ENCODE measurements at regions of chr3 and their contacts with region 1.

Region 1: GRCh38 chr3:136929984-136930670 is 27.7 kb upstream of the IL20RB start:
- DNase-seq: no peak
- H3K4me3 Mint-ChIP-seq: no peak overlapping the region
- H3K27ac Mint-ChIP-seq: no peak overlapping the region
- H3K4me1 Mint-ChIP-seq: peaks cover 62% of the 10 kb centered on the region
- H3K27me3 Mint-ChIP-seq: no peaks in the 10 kb centered on the region

Region 2: DNA sequence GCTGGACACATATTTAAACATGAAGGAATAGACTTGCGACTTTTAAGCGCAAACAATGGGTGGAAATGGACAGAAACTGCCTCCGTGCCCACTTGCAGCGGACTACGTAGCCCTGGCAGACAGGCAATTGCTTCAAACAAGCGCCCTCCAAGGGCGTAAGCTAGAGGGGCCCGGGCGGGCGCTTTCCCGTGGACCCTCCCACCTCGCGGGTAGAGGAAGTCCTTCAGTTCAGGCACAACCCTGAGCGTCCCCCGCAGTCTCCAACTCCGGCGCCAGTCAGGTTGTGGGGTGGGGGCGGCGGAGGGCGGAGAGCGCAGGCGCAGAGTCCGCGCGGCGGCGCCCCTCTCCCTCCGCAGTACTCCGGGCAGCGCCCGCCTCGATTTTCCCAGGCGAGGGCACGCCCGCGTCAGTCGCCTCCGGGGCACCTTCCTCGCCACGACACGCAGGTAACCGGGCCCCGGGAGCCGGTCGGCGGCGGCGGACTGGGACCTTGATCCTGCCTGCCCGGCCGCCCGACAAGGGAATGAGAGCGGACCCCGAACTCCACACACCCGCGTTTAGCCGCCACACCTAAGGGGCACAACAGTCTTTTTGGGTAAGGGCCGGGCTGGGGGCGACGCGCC is 111.2 kb before region 1 on chr3 and contains the start of gene SLC35G2:
- intact Hi-C with region 1: loop called (anchors 5 kb)
- DNase-seq: no peak
- H3K4me3 Mint-ChIP-seq: peak within 1 kb of the TSS; percentile 86
- H3K27ac Mint-ChIP-seq: peak within 1 kb of the TSS; percentile 74
- H3K4me1 Mint-ChIP-seq: peaks cover 27% of the 10 kb centered on the region
- H3K27me3 Mint-ChIP-seq: peaks cover 57% of the 10 kb centered on the region
- total RNA-seq, gene SLC35G2: 2.6 and 3.0 TPM in 2 replicates

Region 3: DNA sequence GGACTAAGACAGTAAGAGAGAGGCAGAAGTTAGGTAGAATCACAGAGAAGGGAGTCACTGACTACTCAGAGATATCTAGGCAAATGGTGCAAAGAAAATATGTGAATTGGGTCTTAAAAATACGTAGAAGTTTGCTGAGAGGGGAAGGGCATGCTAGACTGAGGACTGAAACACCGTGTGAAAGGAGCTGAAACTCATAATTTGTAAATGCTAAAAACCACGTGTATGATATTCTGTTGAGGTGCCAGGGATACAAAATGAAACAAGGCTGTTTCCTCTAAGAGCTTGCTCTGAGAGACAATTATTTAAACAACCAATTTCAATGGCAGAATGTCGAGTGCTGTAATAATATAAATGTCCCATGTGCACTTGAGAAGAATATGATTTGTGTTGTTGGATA is 20.9 kb before region 1 on chr3:
- intact Hi-C with region 1: no loop called
- DNase-seq: no peak
- H3K4me3 Mint-ChIP-seq: no peak overlapping the region
- H3K27ac Mint-ChIP-seq: no peak overlapping the region
- H3K4me1 Mint-ChIP-seq: peaks cover 63% of the 10 kb centered on the region
- H3K27me3 Mint-ChIP-seq: no peaks in the 10 kb centered on the region

Region 4: GRCh38 chr3:136919799-136920580 is 10.1 kb before region 1 on chr3:
- intact Hi-C with region 1: loop called (anchors 1 kb)
- DNase-seq: peak; percentile 33
- H3K4me3 Mint-ChIP-seq: peak overlapping the region; percentile 35
- H3K27ac Mint-ChIP-seq: peak overlapping the region; percentile 72
- H3K4me1 Mint-ChIP-seq: peaks cover 78% of the 10 kb centered on the region
- H3K27me3 Mint-ChIP-seq: no peaks in the 10 kb centered on the region